GM12878 (cell line): ENCODE measurements at regions of chr6 and their contacts with region 1.

Region 1: DNA sequence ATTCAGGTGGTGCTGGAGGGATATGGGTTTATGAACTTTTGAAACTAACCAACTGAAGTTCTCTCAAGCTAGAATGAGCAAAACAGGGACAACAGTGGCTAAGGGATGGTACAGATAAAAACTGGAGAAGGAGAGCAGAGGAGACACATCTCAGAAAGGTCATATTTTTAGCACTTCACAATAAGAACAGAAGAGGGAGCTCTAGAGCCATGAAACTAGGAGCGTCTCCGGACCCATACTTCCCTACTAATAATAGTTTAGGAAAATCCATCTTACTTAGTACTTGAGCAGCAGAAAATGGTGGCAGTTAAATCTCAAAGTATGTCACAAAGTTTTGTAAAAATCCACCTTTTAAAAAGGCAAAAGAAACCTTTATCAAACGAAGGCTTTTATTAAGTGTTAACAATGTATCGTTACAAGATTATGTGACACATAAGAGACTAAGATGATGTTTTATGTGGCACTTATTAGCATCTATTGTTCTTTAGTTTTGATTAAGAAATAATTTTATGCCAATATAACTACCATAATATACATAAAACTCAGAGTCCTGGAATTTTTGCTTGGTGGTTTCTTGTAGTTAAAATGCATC is 278.6 kb downstream of the TBC1D32 start:
- DNase-seq: peak; percentile 4
- ATAC-seq: peak; percentile 86
- H3K4me3 ChIP-seq: no peak overlapping the region
- H3K27ac ChIP-seq: no peak overlapping the region
- H3K4me1 ChIP-seq: no peaks in the 10 kb centered on the region
- H3K27me3 ChIP-seq: no peaks in the 10 kb centered on the region
- CTCF ChIP-seq: peak; percentile 63 to 72 (median 66)
- EP300 ChIP-seq: no peak
- POLR2A ChIP-seq: no peak
- RAD21 ChIP-seq: peak; percentile 81

Region 2: DNA sequence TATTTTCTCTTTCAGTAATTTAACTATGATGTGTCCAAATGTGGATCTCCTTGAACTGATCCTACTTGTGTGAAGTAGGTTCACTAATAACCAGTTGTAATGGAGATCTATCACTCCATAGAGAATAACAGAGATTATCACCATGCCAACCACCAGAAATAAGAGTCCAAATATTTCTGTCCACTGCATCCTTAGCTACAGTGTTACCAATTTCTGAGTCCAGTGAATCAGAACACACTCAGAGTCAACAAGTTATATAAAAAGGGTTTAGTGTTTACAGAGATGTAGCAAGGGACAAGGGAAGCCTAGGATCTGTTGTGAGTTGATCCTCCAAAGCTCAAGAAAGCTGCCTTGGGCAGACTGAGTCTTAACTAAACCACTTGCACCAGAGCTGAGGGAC is 604.2 kb before region 1 on chr6:
- CTCF ChIA-PET with region 1: no interaction called
- POLR2A ChIA-PET with region 1: no interaction called
- RAD21 ChIA-PET with region 1: no interaction called
- SMC1A ChIA-PET with region 1: no interaction called
- in situ Hi-C with region 1: no loop called
- intact Hi-C with region 1: no loop called
- DNase-seq: no peak
- ATAC-seq: no peak
- H3K4me3 ChIP-seq: no peak overlapping the region
- H3K27ac ChIP-seq: no peak overlapping the region
- H3K4me1 ChIP-seq: no peaks in the 10 kb centered on the region
- H3K27me3 ChIP-seq: no peaks in the 10 kb centered on the region
- CTCF ChIP-seq: no peak
- EP300 ChIP-seq: no peak
- POLR2A ChIP-seq: no peak
- RAD21 ChIP-seq: no peak

Region 3: DNA sequence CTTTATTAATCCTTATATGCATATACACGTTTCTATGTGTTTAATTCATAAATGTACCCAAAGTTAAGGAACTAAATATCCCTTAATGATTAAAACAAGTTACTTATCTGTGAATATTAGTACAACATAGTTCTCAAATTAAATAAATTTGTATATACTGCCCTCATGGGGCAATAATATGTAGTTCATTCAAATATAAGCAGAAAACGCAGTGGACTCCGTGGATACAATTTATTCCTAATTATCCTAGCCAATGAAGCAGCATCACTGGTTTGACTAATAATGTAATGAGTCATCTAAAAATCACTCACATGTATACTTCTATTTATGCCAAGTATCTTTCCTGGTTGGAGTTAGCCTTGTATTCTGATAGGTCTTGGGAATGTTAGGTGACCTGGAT is 167.0 kb after region 1 on chr6:
- CTCF ChIA-PET with region 1: no interaction called
- POLR2A ChIA-PET with region 1: no interaction called
- RAD21 ChIA-PET with region 1: no interaction called
- SMC1A ChIA-PET with region 1: no interaction called
- in situ Hi-C with region 1: no loop called
- intact Hi-C with region 1: loop called (anchors 5 kb)
- DNase-seq: no peak
- ATAC-seq: no peak
- H3K4me3 ChIP-seq: no peak overlapping the region
- H3K27ac ChIP-seq: no peak overlapping the region
- H3K4me1 ChIP-seq: no peaks in the 10 kb centered on the region
- H3K27me3 ChIP-seq: no peaks in the 10 kb centered on the region
- CTCF ChIP-seq: no peak; a peak in 1 of 6 replicates
- EP300 ChIP-seq: no peak
- POLR2A ChIP-seq: no peak
- RAD21 ChIP-seq: no peak

Region 4: DNA sequence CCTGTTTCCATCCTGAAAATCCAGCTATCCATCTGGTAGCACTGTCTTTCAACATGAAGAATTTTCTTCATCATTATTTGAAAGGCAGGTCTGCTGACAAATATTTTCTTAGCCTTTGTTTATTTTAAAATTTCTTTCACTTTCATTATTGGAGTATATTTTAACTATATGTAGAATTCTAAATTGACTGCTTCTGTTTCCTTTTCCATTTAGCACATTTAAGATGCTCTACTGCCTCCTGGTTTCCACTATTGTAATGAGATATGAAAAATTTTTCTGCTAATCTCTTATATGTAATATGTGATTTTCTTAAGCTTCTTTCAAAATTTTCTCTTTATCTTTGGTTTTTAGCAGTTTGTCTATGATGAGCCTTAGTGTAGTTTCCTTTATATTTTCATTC is 181.3 kb after region 1 on chr6:
- CTCF ChIA-PET with region 1: no interaction called
- POLR2A ChIA-PET with region 1: no interaction called
- RAD21 ChIA-PET with region 1: no interaction called
- SMC1A ChIA-PET with region 1: no interaction called
- in situ Hi-C with region 1: no loop called
- intact Hi-C with region 1: loop called (anchors 5 kb)
- DNase-seq: no peak
- ATAC-seq: no peak
- H3K4me3 ChIP-seq: no peak overlapping the region
- H3K27ac ChIP-seq: no peak overlapping the region
- H3K4me1 ChIP-seq: no peaks in the 10 kb centered on the region
- H3K27me3 ChIP-seq: no peaks in the 10 kb centered on the region
- CTCF ChIP-seq: no peak
- EP300 ChIP-seq: no peak
- POLR2A ChIP-seq: no peak
- RAD21 ChIP-seq: no peak

Region 5: DNA sequence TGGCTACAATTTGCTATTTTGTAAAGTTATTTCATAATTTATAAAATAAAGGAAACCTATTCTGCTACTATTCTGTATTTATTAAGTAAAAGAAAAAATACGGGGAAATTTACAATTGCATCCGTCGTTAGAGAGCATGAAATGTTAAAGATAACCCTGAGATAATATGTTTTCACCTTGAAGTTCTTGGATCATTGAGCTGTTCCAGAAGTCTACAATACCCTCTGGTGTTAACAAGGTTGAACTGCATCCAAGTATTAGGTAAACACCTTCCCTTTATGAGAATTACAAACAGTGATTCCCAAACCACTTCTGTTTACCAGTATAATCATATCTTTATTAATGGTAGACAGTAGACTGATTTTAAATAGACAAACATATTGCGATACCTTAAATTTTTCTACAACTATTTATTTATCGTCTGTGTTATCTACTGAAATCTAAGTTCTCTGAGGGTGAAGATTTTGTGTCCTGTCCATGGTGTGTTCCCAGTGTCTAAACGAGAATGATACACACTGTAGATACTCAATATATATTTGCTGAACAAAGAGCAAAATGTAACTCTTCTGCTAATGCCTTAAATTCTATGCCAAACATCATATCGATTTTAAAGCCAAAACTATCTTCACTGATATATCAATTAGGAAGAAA is 250.4 kb after region 1 on chr6:
- CTCF ChIA-PET with region 1: interaction called, 87 read pairs
- POLR2A ChIA-PET with region 1: no interaction called
- RAD21 ChIA-PET with region 1: interaction called, 49 read pairs
- SMC1A ChIA-PET with region 1: interaction called, 22 read pairs
- in situ Hi-C with region 1: loop called (anchors 5 kb)
- intact Hi-C with region 1: loop called (anchors 1 kb)
- DNase-seq: no peak
- ATAC-seq: peak; percentile 81
- H3K4me3 ChIP-seq: no peak overlapping the region
- H3K27ac ChIP-seq: no peak overlapping the region
- H3K4me1 ChIP-seq: no peaks in the 10 kb centered on the region
- H3K27me3 ChIP-seq: no peaks in the 10 kb centered on the region
- CTCF ChIP-seq: peak; percentile 60 to 66 (median 62); a peak in 5 of 6 replicates
- EP300 ChIP-seq: no peak
- POLR2A ChIP-seq: no peak
- RAD21 ChIP-seq: peak; percentile 88

Region 6: DNA sequence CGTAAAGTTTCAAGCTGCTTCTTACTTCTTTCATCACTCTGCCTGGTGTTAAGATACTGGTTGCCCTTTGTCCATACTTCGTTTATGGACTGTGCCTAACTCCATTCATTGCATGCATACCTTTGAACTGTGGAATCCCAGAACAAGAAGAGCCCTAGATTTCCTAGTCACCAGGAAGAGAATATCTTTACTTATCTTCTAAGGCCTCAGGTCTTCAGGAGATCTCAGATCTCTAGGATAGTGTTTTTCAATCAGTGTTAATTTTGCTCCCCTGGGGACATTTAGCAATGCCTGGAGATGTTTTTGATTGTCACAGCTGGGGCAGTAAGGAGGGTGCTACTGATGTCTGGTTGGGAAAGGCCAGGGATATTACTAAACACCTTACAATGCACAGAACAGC is 344.3 kb after region 1 on chr6:
- CTCF ChIA-PET with region 1: interaction called, 8 read pairs
- POLR2A ChIA-PET with region 1: no interaction called
- RAD21 ChIA-PET with region 1: interaction called, 3 read pairs
- SMC1A ChIA-PET with region 1: interaction called, 3 read pairs
- in situ Hi-C with region 1: no loop called
- intact Hi-C with region 1: loop called (anchors 2 kb)
- DNase-seq: no peak
- ATAC-seq: no peak
- H3K4me3 ChIP-seq: no peak overlapping the region
- H3K27ac ChIP-seq: no peak overlapping the region
- H3K4me1 ChIP-seq: no peaks in the 10 kb centered on the region
- H3K27me3 ChIP-seq: no peaks in the 10 kb centered on the region
- CTCF ChIP-seq: no peak
- EP300 ChIP-seq: no peak
- POLR2A ChIP-seq: no peak
- RAD21 ChIP-seq: no peak

Region 7: DNA sequence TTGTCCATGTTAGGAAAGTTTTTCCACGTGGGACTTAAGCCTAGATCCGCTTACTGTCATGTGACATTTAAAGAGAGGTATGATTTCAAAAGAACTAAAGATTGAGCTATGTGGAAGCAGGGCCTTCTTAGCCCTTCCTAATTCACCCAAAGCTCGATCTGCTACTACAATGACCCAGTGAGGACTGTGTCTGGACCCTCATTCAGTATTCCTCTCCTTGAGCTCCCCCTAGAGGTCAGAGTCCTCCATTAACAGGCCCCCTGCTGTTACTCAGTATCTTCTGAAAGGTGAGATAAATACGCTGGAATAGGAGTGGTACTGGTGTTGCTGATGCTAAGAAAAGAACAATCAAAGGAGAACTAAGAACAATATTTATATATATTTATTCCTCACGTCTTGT is 793.8 kb after region 1 on chr6:
- CTCF ChIA-PET with region 1: interaction called, 3 read pairs
- POLR2A ChIA-PET with region 1: no interaction called
- RAD21 ChIA-PET with region 1: no interaction called
- SMC1A ChIA-PET with region 1: interaction called, 3 read pairs
- in situ Hi-C with region 1: no loop called
- intact Hi-C with region 1: loop called (anchors 5 kb)
- DNase-seq: no peak
- ATAC-seq: peak; percentile 97
- H3K4me3 ChIP-seq: no peak overlapping the region
- H3K27ac ChIP-seq: no peak overlapping the region
- H3K4me1 ChIP-seq: no peaks in the 10 kb centered on the region
- H3K27me3 ChIP-seq: no peaks in the 10 kb centered on the region
- CTCF ChIP-seq: peak; percentile 71 to 74 (median 73)
- EP300 ChIP-seq: no peak
- POLR2A ChIP-seq: no peak
- RAD21 ChIP-seq: peak; percentile 83

Region 8: DNA sequence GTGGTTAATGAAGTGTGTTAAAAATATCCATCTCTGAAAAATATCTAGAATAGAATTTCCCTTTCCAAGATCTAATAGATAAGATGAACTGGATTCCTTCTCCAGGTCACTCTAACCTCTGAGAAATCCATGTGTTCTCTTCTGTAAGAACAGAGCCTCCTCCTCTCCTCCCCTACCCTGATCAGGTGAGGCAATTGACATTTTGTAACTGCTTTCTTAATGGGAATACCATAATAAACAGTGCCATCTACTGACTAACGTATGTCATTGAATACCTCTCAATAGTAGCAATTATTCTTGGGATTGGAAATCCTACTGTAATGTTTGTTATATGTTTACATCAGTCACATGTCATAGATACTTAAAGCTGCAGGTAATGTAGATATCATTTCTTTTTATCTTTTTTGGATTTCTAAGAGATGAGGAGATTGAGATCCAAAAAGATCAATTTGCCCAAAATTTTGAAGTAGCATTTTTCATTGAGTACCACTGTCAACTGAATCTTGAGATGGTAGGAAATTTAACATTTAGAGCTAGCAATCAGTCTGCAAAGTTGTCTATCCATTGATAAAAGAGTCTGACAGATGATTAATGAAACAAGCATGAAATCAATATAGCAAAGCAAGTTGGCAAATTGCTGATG is 978.0 kb after region 1 on chr6:
- CTCF ChIA-PET with region 1: interaction called, 4 read pairs
- POLR2A ChIA-PET with region 1: no interaction called
- RAD21 ChIA-PET with region 1: no interaction called
- SMC1A ChIA-PET with region 1: interaction called, 3 read pairs
- in situ Hi-C with region 1: loop called (anchors 10 kb)
- intact Hi-C with region 1: loop called (anchors 5 kb)
- DNase-seq: no peak
- ATAC-seq: peak; percentile 84
- H3K4me3 ChIP-seq: no peak overlapping the region
- H3K27ac ChIP-seq: no peak overlapping the region
- H3K4me1 ChIP-seq: no peaks in the 10 kb centered on the region
- H3K27me3 ChIP-seq: no peaks in the 10 kb centered on the region
- CTCF ChIP-seq: peak; percentile 40 to 62 (median 46); a peak in 5 of 6 replicates
- EP300 ChIP-seq: no peak
- POLR2A ChIP-seq: no peak
- RAD21 ChIP-seq: peak; percentile 60